Common myeloid progenitor, CD34-positive (primary cell): ENCODE measurements at regions of chr1 and their contacts with region 1.

Region 1: GRCh38 chr1:156445789-156446263 is 54.7 kb downstream of the MEF2D start:
- DNase-seq: peak; percentile 69 to 75 (median 74)
- H3K4me3 ChIP-seq: no peak overlapping the region
- H3K27ac ChIP-seq: no peak overlapping the region
- H3K4me1 ChIP-seq: peaks cover 0 to 2% (median 0%) of the 10 kb centered on the region in 4 experiments
- H3K27me3 ChIP-seq: peaks cover 24 to 44% (median 33%) of the 10 kb centered on the region in 5 experiments

Region 2: GRCh38 chr1:156082309-156083091 is 363.3 kb before region 1 on chr1 and contains the start of gene MEX3A:
- CTCF ChIA-PET with region 1: no interaction called
- POLR2A ChIA-PET with region 1: no interaction called
- DNase-seq: peak; percentile 49 to 66 (median 55)
- H3K4me3 ChIP-seq: peak within 1 kb of the TSS; percentile 71 to 97 (median 81)
- H3K27ac ChIP-seq: no peak within 1 kb of the TSS
- H3K4me1 ChIP-seq: peaks cover 0 to 27% (median 15%) of the 10 kb centered on the region in 4 experiments
- H3K27me3 ChIP-seq: no peaks in the 10 kb centered on the region

Region 3: DNA sequence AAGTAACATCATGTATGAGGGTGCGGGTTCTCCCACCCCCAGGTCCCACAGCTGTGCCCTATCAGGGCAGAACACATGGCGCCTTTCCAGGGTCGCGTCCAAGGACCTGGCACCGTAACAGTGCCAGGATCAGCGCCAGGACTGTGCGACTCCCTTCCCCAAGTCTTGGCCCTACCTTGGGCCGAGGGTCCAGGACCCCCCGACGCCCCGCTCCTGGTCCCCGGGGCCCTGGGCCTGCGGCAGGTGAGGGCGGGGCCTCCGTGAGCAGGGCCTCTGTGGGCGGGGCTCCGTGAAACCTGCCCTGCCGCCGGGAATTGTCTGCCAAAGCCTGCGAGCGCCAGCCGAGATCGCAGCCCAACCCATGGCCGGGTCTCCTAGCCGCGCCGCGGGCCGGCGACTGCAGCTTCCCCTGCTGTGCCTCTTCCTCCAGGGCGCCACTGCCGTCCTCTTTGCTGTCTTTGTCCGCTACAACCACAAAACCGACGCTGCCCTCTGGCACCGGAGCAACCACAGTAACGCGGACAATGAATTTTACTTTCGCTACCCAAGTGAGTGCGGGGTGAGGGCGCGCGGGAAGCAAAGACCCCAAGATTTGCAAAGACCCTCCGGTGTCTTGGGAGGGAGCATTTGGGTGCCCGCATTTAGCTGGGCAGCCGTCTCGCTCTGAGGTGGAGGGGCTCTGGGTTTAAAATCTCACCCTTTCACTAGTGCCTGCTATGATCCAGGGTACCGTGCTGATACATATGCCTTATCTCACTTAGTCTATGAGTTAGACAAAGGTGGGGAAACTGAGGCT is 76.7 kb before region 1 on chr1 and contains the start of gene RHBG:
- CTCF ChIA-PET with region 1: interaction called, 16 read pairs
- POLR2A ChIA-PET with region 1: no interaction called
- DNase-seq: peak in 2 of 3 donors; percentile 47 to 53
- H3K4me3 ChIP-seq: peak within 1 kb of the TSS; percentile 22 to 72 (median 49)
- H3K27ac ChIP-seq: no peak within 1 kb of the TSS
- H3K4me1 ChIP-seq: peaks cover 0 to 15% (median 12%) of the 10 kb centered on the region in 4 experiments
- H3K27me3 ChIP-seq: peaks cover 2 to 30% (median 13%) of the 10 kb centered on the region in 5 experiments

Region 4: DNA sequence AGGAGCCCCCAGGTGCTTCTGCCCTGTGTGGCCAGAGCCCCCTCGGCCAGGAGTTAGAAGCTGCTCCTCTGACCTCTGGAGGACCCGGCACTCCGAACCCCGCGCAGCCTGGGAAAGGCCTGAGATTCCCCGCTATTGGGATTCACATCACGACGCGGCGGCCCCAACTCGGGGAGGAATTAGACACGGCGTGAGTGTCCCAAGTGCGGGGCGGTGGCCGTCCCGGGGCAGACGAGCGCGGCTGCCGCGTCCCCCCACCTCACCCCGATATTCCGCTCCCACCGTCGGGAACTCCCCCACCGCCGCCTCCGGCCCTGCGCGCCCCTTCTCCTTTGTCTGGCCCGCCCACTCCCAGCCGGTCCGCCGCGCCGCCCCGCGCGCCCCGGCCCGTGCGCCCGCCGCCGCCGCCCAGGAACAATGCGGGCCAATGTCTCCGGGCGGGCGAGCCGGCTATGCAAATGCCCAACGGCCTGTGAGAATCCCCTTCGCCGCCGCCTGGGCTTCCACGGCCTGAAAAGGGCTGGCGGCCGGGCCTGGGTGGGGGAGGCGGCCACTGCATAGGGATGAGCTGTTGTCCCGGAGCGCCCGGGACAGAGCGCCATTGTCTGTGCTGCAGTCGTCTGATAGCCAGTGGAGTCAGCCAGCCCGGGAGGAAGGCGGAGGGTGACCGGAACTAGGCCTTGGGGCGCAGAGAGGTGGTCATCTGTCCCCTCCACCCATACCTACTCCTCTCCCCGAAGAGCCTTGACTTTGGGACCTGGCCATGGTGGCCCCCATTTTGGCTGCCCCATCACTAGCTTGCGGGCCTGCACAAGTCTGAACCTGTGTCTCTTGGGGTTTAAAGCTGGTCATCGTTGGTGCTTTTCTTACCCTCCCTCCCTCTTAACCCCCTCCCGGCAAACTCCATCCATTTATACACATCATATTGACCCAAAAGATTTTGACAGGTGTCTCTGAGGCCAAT is 57.4 kb before region 1 on chr1:
- CTCF ChIA-PET with region 1: interaction called, 166 read pairs
- POLR2A ChIA-PET with region 1: interaction called, 7 read pairs
- DNase-seq: peak in 1 of 3 donors; percentile 22
- H3K4me3 ChIP-seq: peak overlapping the region in 5 of 7 experiments; percentile 1 to 62 (median 46)
- H3K27ac ChIP-seq: no peak overlapping the region
- H3K4me1 ChIP-seq: peaks cover 3 to 28% (median 22%) of the 10 kb centered on the region in 4 experiments
- H3K27me3 ChIP-seq: peaks cover 0 to 60% (median 13%) of the 10 kb centered on the region in 5 experiments

Region 5: GRCh38 chr1:156414461-156415064 is 31.3 kb before region 1 on chr1:
- CTCF ChIA-PET with region 1: interaction called, 12 read pairs
- POLR2A ChIA-PET with region 1: no interaction called
- DNase-seq: peak in 2 of 3 donors; percentile 41 to 48
- H3K4me3 ChIP-seq: no peak overlapping the region
- H3K27ac ChIP-seq: no peak overlapping the region
- H3K4me1 ChIP-seq: no peaks in the 10 kb centered on the region
- H3K27me3 ChIP-seq: peaks cover 17 to 85% (median 35%) of the 10 kb centered on the region in 5 experiments

Region 6: DNA sequence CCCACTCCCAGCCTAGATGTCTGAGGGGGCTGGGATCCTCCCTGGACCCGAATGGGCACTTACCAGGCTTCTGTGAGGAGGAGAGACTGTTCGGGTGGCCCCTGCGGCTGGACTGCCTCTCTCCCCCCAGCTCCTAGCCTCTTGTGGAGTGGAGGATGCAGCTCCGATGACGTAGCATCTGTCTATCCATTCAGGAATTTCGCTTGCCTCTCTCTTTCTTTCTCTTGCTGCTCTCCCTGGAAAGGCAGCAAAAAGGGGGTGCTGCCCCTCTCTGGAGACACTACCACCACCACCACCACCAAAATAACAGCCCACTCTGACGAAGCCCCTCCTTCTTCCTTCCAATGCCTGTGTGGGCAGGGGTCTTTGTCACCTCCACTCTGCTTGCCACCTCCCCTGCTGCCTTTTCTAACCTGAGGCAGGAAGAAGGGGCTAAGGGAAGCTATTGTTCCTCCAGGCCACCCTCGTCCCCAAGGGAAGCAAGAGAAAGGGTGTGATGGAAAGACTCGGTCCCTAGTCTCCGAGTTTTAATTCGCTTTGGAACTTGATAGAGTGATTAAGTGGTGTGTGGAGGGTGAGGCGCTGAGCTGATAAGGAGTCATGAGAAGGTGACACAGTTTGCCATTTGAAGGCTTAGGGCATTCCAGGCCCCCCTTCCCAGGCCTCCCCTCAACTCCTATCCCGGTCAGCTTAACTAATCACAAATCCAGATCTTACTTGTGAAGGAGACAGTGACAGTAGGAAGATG is 16.3 kb before region 1 on chr1:
- CTCF ChIA-PET with region 1: interaction called, 38 read pairs
- POLR2A ChIA-PET with region 1: no interaction called
- DNase-seq: no peak
- H3K4me3 ChIP-seq: no peak overlapping the region
- H3K27ac ChIP-seq: no peak overlapping the region
- H3K4me1 ChIP-seq: no peaks in the 10 kb centered on the region
- H3K27me3 ChIP-seq: peaks cover 15 to 99% (median 73%) of the 10 kb centered on the region in 5 experiments

Region 7: GRCh38 chr1:156456622-156457465 is 11.0 kb after region 1 on chr1:
- CTCF ChIA-PET with region 1: interaction called, 20 read pairs
- POLR2A ChIA-PET with region 1: no interaction called
- DNase-seq: peak; percentile 98 to 99 (median 98)
- H3K4me3 ChIP-seq: peak overlapping the region; percentile 36 to 81 (median 74)
- H3K27ac ChIP-seq: peak overlapping the region; percentile 64 to 89
- H3K4me1 ChIP-seq: peaks cover 5 to 26% (median 17%) of the 10 kb centered on the region in 4 experiments
- H3K27me3 ChIP-seq: peaks cover 0 to 1% (median 0%) of the 10 kb centered on the region in 5 experiments